ENCODE measurements at regions of chr19 and their contacts with region 1.

Region 1: DNA sequence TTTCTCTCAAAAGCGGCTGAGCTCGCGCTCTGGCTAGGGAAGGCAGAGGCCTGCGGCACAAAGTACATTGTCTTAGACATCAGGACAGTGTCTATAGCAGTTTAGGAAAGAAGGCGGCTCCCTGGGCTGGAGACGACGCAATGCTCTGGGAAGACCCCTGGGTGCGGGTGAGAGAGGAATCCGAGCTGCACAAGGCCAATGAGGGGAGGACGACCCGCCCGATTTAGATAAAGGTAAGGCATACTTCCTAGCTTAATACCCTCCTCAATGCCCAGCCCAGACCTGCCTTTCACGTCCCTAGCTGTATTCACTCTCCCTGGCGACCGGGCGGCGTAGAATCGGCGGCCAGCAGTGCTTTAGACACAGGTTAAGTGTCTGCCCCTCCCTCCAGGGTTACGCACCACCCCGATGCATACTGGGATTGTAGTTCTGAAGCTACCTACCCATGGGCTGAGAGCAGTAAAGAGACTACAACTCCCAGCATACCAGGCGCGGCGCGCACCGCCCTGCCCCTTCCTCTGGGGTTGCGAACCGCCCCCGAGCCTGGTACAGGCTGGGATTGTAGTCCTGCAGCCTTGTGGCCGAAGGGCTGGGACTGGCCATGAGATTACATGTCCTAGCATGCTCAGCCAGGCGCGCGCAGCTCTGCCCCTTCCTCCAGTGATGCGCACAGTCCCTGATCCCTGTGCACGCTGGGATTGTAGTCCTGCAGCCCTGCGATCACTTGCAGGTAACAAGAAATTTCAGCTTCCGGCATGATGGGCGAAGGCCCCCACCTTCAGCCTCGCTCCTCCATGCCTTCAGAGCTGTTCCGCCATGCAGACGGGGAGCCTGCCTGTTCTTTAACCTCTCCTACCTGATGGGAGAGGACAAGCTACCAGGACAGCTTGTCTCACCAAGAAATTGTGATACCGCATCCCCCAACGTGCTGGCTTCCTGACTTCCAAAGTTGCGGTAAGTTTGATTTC is 43.4 kb upstream of the ZNF14 start:
- DNase-seq: peak; percentile 79 to 95 (median 91)
- ATAC-seq: peak; percentile 100
- H3K4me3 ChIP-seq: peak overlapping the region; percentile 91
- H3K4me3 Mint-ChIP-seq: peak overlapping the region; percentile 91 to 100 (median 98)
- H3K27ac ChIP-seq: peak overlapping the region; percentile 84
- H3K27ac Mint-ChIP-seq: peak overlapping the region; percentile 88 to 99 (median 97)
- H3K4me1 ChIP-seq: peaks cover 11 to 20% of the 10 kb centered on the region in 2 donors
- H3K4me1 Mint-ChIP-seq: peaks cover 25 to 67% (median 54%) of the 10 kb centered on the region in 7 donors
- H3K27me3 ChIP-seq: no peaks in the 10 kb centered on the region
- H3K27me3 Mint-ChIP-seq: no peaks in the 10 kb centered on the region

Region 2: DNA sequence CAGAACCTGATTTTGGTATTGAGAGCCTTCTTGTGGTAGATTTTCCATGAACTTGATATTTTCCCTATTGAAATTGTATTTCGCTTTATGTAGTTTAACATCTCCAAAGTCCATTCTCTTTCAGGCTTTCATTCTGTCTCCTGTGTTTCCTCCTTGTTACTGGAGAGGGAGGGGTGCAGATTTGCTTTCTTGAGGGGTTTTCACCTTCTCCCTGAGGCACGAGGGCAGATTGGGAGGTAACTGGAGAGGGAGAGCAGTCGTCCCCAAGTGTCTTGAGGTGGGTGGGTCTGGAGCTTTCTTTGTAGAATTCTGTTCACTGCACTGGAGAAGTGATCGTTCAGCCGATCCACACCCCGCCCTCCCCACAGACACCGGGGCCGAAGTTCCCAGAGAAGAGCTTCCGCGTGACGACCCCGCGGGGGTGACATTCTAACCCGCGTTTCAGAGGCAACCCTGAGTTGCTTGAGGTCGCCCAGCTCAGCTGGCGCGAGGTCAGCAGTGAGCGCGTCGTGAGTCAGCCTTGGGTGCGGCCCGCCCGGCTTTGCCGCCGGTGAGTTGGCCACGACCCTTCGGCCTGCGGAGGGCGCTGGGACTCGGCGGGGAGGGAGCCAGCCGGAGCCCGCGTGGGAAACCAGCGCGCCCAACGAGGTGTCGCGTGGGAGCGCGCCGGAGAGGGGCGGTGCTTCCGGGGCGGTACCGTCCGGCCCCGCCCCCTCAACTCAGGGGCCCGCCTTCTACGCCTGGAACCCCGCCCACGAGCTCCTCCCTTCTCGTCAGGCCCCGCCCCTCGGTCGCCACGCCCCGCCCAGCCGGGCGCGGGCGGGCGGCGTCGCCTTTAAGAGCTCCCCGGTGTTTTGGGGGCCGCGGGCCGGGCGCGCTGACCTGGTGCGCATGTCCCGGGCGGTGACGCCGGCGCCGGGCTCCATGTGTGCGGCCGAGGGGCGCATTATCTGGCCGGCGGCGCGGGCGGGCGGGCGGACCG is 371.2 kb before region 1 on chr19 and contains the start of gene GATAD2A:
- CTCF ChIA-PET with region 1: no interaction called
- POLR2A ChIA-PET with region 1: no interaction called
- intact Hi-C with region 1: loop called in 1 of 2 experiments (anchors 2 kb)
- DNase-seq: peak; percentile 85 to 99 (median 90)
- ATAC-seq: peak; percentile 96
- H3K4me3 ChIP-seq: peak within 1 kb of the TSS; percentile 65
- H3K4me3 Mint-ChIP-seq: peak within 1 kb of the TSS; percentile 89 to 97 (median 94)
- H3K27ac ChIP-seq: peak within 1 kb of the TSS; percentile 86
- H3K27ac Mint-ChIP-seq: peak within 1 kb of the TSS; percentile 86 to 98 (median 92)
- H3K4me1 ChIP-seq: peaks cover 26 to 38% of the 10 kb centered on the region in 2 donors
- H3K4me1 Mint-ChIP-seq: peaks cover 37 to 70% (median 66%) of the 10 kb centered on the region in 7 donors
- H3K27me3 ChIP-seq: no peaks in the 10 kb centered on the region
- H3K27me3 Mint-ChIP-seq: no peaks in the 10 kb centered on the region
- total RNA-seq, gene GATAD2A: 97.9 to 123 (median 116) TPM

Region 3: GRCh38 chr19:19531951-19532805 is 244.1 kb before region 1 on chr19:
- CTCF ChIA-PET with region 1: no interaction called
- POLR2A ChIA-PET with region 1: interaction called, 4 read pairs
- intact Hi-C with region 1: loop called in 1 of 2 experiments (anchors 1 kb)
- DNase-seq: peak; percentile 69 to 93 (median 84)
- ATAC-seq: peak; percentile 90
- H3K4me3 ChIP-seq: no peak overlapping the region
- H3K4me3 Mint-ChIP-seq: no peak overlapping the region
- H3K27ac ChIP-seq: no peak overlapping the region
- H3K27ac Mint-ChIP-seq: peak overlapping the region in 8 of 9 donors; percentile 33 to 84 (median 76)
- H3K4me1 ChIP-seq: peaks cover 3 to 9% of the 10 kb centered on the region in 2 donors
- H3K4me1 Mint-ChIP-seq: peaks cover 7 to 22% (median 17%) of the 10 kb centered on the region in 7 donors
- H3K27me3 ChIP-seq: no peaks in the 10 kb centered on the region
- H3K27me3 Mint-ChIP-seq: peaks cover 0 to 6% (median 0%) of the 10 kb centered on the region in 5 donors

Region 4: DNA sequence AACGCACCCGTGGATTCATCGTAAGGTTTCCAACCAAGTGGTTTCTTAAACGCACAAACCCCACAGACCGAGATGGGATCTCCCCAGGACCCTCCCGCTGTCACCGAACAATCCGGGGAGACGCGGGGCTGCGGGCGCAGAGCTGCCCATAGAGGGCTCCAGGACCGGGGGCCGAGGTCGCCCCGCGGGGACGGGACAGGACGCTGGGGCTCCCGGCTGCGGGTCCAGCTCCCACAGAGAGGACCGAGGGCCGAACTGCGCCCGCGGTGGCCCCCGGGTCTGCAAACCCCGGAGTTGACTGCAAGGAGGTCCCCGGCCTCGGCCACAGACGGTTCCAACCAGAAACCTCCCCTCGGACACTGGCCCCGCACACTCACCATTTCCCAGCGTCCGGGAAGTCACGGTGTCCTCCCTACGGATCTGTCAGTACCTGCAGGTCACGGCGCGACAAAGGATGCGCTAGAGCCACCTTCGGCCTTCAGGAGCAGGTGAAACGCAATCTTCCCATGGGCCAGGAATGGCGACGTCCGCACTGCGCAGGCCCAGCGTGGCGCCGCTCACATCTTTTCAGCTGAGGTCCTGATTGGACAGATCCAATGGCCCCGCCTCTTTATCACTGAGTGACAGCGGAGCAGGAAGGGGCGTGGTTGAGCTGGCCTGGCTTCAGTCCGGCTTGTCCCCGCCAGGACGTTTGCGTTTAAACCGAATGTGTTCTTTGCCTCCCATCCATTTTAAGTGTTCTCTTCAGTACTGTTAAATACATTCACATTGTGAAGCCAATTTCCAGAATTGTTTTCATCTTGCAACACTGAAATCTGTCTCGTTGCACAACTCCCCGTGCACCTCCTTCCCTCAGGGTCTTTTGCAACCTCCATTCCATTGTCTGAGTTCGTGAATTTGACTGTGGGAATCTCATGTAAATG is 43.5 kb before region 1 on chr19 and contains the start of gene ZNF14:
- CTCF ChIA-PET with region 1: interaction called, 9 read pairs
- POLR2A ChIA-PET with region 1: interaction called, 18 read pairs
- intact Hi-C with region 1: loop called (anchors 1 kb)
- DNase-seq: peak; percentile 69 to 91 (median 89)
- ATAC-seq: peak; percentile 100
- H3K4me3 ChIP-seq: peak within 1 kb of the TSS; percentile 78
- H3K4me3 Mint-ChIP-seq: peak within 1 kb of the TSS; percentile 93 to 100 (median 98)
- H3K27ac ChIP-seq: peak within 1 kb of the TSS; percentile 87
- H3K27ac Mint-ChIP-seq: peak within 1 kb of the TSS; percentile 93 to 98 (median 95)
- H3K4me1 ChIP-seq: peaks cover 3 to 7% of the 10 kb centered on the region in 2 donors
- H3K4me1 Mint-ChIP-seq: peaks cover 16 to 39% (median 21%) of the 10 kb centered on the region in 7 donors
- H3K27me3 ChIP-seq: no peaks in the 10 kb centered on the region
- H3K27me3 Mint-ChIP-seq: no peaks in the 10 kb centered on the region
- total RNA-seq, gene ZNF14: 7.0 to 35.0 (median 30.3) TPM

Region 5: GRCh38 chr19:19900729-19901444 is 124.6 kb after region 1 on chr19 and contains the start of gene ZNF93:
- CTCF ChIA-PET with region 1: no interaction called
- POLR2A ChIA-PET with region 1: interaction called, 8 read pairs
- intact Hi-C with region 1: loop called (anchors 1 kb)
- DNase-seq: peak; percentile 67 to 94 (median 91)
- ATAC-seq: peak; percentile 99
- H3K4me3 ChIP-seq: peak within 1 kb of the TSS; percentile 83
- H3K4me3 Mint-ChIP-seq: peak within 1 kb of the TSS; percentile 90 to 100 (median 97)
- H3K27ac ChIP-seq: peak within 1 kb of the TSS; percentile 77
- H3K27ac Mint-ChIP-seq: peak within 1 kb of the TSS; percentile 82 to 97 (median 92)
- H3K4me1 ChIP-seq: no peaks in the 10 kb centered on the region
- H3K4me1 Mint-ChIP-seq: peaks cover 16 to 40% (median 32%) of the 10 kb centered on the region in 7 donors
- H3K27me3 ChIP-seq: no peaks in the 10 kb centered on the region
- H3K27me3 Mint-ChIP-seq: no peaks in the 10 kb centered on the region
- total RNA-seq, gene ZNF93: 3.4 to 11.6 (median 7.2) TPM

Region 6: GRCh38 chr19:19956434-19957075 is 180.2 kb after region 1 on chr19:
- CTCF ChIA-PET with region 1: no interaction called
- POLR2A ChIA-PET with region 1: no interaction called
- intact Hi-C with region 1: no loop called
- DNase-seq: no peak
- ATAC-seq: no peak
- H3K4me3 ChIP-seq: no peak overlapping the region
- H3K4me3 Mint-ChIP-seq: no peak overlapping the region
- H3K27ac ChIP-seq: no peak overlapping the region
- H3K27ac Mint-ChIP-seq: no peak overlapping the region
- H3K4me1 ChIP-seq: no peaks in the 10 kb centered on the region
- H3K4me1 Mint-ChIP-seq: peaks cover 0 to 8% (median 5%) of the 10 kb centered on the region in 7 donors
- H3K27me3 ChIP-seq: no peaks in the 10 kb centered on the region
- H3K27me3 Mint-ChIP-seq: no peaks in the 10 kb centered on the region

Measured in naive thymus-derived CD4-positive, alpha-beta T cell (primary cell).